ENCODE measurements at regions of chr14 and their contacts with region 1.

Region 1: DNA sequence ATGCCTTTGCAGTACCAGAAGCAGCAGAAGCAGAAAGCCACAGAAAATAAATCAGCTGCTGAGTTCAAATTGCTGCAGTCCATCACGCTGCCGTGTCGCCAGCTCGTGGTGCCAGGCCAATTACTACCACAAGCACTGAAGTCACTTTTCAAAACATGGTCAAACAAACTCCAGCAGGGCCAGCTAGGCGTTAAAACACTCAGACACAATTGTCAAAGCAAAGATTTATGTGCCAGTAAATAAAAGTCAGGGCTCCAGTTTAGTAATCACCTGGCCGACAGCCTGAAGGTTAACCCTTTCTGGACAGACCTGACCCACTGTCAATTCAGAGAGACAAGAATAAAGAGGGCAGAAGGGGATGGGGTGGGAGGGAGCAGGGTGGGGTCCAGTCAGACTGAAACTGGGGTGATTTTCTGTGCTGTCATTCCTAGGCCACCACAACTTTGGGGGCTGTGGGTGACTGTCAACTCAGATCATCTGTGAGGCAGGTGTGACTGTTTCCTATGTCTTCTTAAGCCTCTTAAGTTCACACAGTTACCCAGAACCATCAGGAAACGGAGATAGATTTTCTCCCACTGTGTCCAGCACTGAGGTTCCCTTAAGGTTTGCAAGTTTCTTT is 109.8 kb upstream of the FUT8 start:
- DNase-seq: peak; percentile 98
- ATAC-seq: peak; percentile 69
- H3K4me3 ChIP-seq: peak overlapping the region; percentile 66
- H3K27ac ChIP-seq: peak overlapping the region; percentile 96
- H3K4me1 ChIP-seq: peaks cover 49% of the 10 kb centered on the region
- H3K27me3 ChIP-seq: no peaks in the 10 kb centered on the region
- CTCF ChIP-seq: no peak
- EP300 ChIP-seq: peak in 1 of 2 experiments; percentile 65; a peak in 2 of 4 replicates
- POLR2A ChIP-seq: 0 out of 2 replicates have a peak, but pooled peaks have one; percentile 23
- RAD21 ChIP-seq: 0 out of 2 replicates have a peak, but pooled peaks have one; percentile 12

Region 2: DNA sequence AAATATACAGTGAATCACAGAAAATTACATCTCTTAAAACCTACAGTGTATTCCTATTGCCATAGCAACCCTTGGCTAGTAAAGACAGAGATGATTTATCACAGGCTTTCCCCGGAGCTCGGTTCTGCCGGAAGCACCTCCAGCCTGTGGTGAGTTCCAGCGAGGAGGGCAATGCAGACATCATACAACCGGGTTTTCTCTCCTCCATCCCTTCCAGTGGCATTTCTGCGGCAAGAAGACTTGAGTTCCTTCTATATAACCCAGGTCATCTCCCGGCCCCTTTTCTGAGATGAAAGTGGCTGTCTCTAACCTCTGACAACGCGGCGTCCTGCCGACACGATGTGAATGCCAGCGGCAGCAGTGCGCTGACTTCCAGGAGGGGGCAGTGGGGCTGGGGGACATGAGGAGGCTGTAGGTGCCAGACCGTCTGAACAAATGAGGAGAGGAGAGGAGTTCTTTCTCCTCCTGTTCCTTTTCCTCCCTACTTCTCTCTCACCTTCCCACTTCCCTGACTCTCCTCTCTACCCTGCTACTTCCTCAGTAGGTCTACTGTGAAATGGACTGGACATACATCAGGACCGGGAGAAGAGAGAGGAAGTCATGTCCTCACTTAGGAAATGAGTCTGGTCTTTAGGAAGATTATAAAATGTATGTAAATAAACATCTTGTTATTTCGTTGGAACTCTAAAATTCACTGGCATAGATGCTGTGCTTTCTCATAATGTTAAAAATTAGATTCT is 131.7 kb before region 1 on chr14:
- CTCF ChIA-PET with region 1: interaction called, 3 read pairs
- POLR2A ChIA-PET with region 1: no interaction called
- RAD21 ChIA-PET with region 1: interaction called, 5 read pairs
- SMC1A ChIA-PET with region 1: interaction called, 4 read pairs
- in situ Hi-C with region 1: no loop called
- intact Hi-C with region 1: loop called (anchors 5 kb)
- DNase-seq: peak; percentile 40
- ATAC-seq: peak; percentile 55
- H3K4me3 ChIP-seq: peak overlapping the region; percentile 57
- H3K27ac ChIP-seq: peak overlapping the region; percentile 59
- H3K4me1 ChIP-seq: peaks cover 26% of the 10 kb centered on the region
- H3K27me3 ChIP-seq: no peaks in the 10 kb centered on the region
- CTCF ChIP-seq: peak in 2 of 3 experiments; percentile 25 to 43; a peak in 3 of 6 replicates
- EP300 ChIP-seq: no peak
- POLR2A ChIP-seq: 0 out of 2 replicates have a peak, but pooled peaks have one; percentile 44
- RAD21 ChIP-seq: peak; percentile 46

Region 3: DNA sequence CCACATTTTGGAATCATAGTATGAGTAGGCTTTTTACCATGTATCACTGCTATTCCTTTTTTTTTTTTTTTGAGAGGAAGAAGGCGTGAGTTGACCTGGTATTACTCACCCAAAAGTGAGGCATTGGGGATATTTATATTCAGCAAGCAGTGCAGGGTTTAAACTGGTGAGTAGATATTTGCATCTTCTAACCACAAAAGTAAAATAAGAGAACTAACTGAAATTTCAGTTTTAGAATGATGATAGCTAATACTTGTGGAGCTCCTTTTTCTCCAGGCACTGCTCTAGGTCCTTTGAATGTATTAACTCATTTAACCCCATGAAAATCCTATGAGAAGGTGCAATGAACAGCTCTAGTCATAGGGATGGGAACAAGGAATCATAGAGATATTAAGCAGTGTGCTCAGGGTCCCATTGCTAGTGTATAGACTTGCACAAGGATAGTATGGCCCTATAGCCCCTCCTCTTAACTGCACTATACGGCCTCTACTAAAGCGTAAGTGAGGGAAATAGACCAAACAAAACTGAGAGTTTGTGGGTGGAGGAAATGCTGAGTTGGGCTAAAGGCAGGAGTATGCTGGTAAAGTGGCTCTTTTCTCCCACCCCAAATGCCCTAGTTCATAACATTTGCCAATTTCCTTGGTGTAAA is 96.1 kb before region 1 on chr14:
- CTCF ChIA-PET with region 1: interaction called, 5 read pairs
- POLR2A ChIA-PET with region 1: interaction called, 5 read pairs
- RAD21 ChIA-PET with region 1: interaction called, 12 read pairs
- SMC1A ChIA-PET with region 1: interaction called, 4 read pairs
- in situ Hi-C with region 1: no loop called
- intact Hi-C with region 1: loop called (anchors 2 kb)
- DNase-seq: peak; percentile 88
- ATAC-seq: peak; percentile 83
- H3K4me3 ChIP-seq: peak overlapping the region; percentile 56
- H3K27ac ChIP-seq: peak overlapping the region; percentile 96
- H3K4me1 ChIP-seq: peaks cover 63% of the 10 kb centered on the region
- H3K27me3 ChIP-seq: no peaks in the 10 kb centered on the region
- CTCF ChIP-seq: no peak
- EP300 ChIP-seq: peak; percentile 56 to 70; a peak in 3 of 4 replicates
- POLR2A ChIP-seq: peak; percentile 33; the same call in 1 of the 2 replicates
- RAD21 ChIP-seq: no peak

Region 4: DNA sequence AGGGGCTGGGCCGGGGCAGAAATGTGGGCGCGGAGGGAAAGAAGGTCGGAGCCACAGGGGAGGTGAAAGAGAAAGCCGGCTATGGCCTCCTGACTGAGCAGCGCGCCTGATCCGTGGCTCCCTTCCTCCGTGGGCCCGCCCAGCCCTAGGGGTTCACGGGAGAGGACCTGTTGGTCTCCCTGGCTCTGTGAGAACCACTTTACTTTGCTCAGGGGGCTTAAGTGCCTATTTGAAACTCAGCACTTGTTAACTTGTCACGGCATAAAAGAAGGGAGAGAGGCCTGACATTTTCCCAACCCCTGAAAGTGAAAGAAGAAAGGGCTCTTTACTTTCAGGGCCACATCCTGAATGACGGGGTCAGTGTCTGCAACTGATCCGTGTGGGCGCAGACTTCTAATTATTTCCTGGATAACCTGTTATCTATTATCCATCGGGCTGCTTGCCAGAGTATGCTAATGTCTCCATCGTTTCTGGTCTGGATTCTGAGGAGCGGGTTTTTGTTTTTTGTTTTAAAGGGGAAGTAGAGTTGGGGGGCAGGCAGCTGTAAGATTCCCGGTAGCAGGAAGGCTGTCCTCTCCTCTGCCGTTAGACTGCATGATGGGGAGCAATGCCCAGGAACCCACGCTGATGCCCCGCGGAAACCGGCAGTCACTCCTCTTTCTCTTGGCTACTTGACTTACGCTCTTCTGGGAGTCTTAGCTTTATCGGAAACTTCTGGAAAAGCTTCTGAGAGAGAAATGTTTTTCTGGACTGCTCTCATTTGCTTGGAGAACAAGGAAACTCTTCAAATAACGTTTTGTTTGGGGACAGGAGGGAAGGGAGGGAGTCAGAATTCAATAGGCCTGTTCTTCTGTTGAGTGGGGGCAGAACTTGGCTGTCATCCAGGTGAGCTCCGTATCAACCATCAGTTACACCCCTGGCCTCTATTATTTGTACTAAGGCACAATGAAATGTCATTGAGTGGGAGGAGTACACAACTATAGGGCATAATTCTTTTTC is 72.6 kb before region 1 on chr14:
- CTCF ChIA-PET with region 1: interaction called, 5 read pairs
- POLR2A ChIA-PET with region 1: no interaction called
- RAD21 ChIA-PET with region 1: interaction called, 4 read pairs
- SMC1A ChIA-PET with region 1: interaction called, 50 read pairs
- in situ Hi-C with region 1: no loop called
- intact Hi-C with region 1: loop called (anchors 1 kb)
- DNase-seq: no peak
- ATAC-seq: peak; percentile 60
- H3K4me3 ChIP-seq: 0 out of 2 replicates have a peak overlapping the region, but pooled peaks have one; percentile 26
- H3K27ac ChIP-seq: peak overlapping the region; percentile 64
- H3K4me1 ChIP-seq: peaks cover 41% of the 10 kb centered on the region
- H3K27me3 ChIP-seq: no peaks in the 10 kb centered on the region
- CTCF ChIP-seq: no peak
- EP300 ChIP-seq: no peak
- POLR2A ChIP-seq: no peak
- RAD21 ChIP-seq: no peak

Region 5: GRCh38 chr14:65287264-65288131 is 15.2 kb before region 1 on chr14:
- CTCF ChIA-PET with region 1: interaction called, 63 read pairs
- POLR2A ChIA-PET with region 1: interaction called, 51 read pairs
- RAD21 ChIA-PET with region 1: interaction called, 146 read pairs
- SMC1A ChIA-PET with region 1: interaction called, 203 read pairs
- in situ Hi-C with region 1: no loop called
- intact Hi-C with region 1: loop called (anchors 1 kb)
- DNase-seq: no peak
- ATAC-seq: peak; percentile 77
- H3K4me3 ChIP-seq: peak overlapping the region; percentile 53
- H3K27ac ChIP-seq: peak overlapping the region; percentile 98
- H3K4me1 ChIP-seq: peaks cover 77% of the 10 kb centered on the region
- H3K27me3 ChIP-seq: no peaks in the 10 kb centered on the region
- CTCF ChIP-seq: peak in 2 of 3 experiments; percentile 2 to 6; a peak in 1 of 6 replicates
- EP300 ChIP-seq: peak; percentile 51 to 55; a peak in 2 of 4 replicates
- POLR2A ChIP-seq: peak; percentile 75
- RAD21 ChIP-seq: no peak; the same call in 1 of the 2 replicates

Region 6: DNA sequence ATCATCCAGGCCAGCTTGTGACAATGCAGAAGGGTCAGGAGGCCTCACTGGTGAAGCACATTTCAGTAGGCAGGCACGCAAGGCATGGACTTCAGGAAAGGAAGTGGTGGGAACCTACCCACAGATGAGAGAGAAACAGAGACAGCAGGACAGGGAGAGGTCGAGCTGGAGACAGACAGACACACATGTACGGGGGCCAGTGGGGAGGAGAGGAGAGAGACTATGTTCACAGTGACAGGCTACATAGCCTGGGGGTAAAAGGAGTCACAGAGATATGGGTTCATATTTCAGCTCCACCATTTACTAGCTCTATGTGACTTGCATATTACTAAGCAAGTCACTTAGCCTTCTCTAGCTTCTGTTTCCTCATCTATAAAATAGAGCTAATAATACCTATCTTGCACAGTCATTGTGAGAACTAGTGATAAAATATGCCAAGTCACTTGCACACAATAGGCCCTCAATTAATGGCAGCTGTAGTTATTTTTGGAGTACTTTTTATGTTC is 18.7 kb after region 1 on chr14:
- CTCF ChIA-PET with region 1: interaction called, 61 read pairs
- POLR2A ChIA-PET with region 1: interaction called, 223 read pairs
- RAD21 ChIA-PET with region 1: interaction called, 272 read pairs
- SMC1A ChIA-PET with region 1: interaction called, 391 read pairs
- in situ Hi-C with region 1: no loop called
- intact Hi-C with region 1: loop called (anchors 1 kb)
- DNase-seq: peak; percentile 82
- ATAC-seq: peak; percentile 51
- H3K4me3 ChIP-seq: no peak overlapping the region
- H3K27ac ChIP-seq: peak overlapping the region; percentile 94
- H3K4me1 ChIP-seq: peaks cover 47% of the 10 kb centered on the region
- H3K27me3 ChIP-seq: no peaks in the 10 kb centered on the region
- CTCF ChIP-seq: no peak
- EP300 ChIP-seq: peak in 1 of 2 experiments; percentile 35; a peak in 1 of 4 replicates
- POLR2A ChIP-seq: peak; percentile 37; the same call in 1 of the 2 replicates
- RAD21 ChIP-seq: peak; percentile 11; the same call in 1 of the 2 replicates

Region 7: DNA sequence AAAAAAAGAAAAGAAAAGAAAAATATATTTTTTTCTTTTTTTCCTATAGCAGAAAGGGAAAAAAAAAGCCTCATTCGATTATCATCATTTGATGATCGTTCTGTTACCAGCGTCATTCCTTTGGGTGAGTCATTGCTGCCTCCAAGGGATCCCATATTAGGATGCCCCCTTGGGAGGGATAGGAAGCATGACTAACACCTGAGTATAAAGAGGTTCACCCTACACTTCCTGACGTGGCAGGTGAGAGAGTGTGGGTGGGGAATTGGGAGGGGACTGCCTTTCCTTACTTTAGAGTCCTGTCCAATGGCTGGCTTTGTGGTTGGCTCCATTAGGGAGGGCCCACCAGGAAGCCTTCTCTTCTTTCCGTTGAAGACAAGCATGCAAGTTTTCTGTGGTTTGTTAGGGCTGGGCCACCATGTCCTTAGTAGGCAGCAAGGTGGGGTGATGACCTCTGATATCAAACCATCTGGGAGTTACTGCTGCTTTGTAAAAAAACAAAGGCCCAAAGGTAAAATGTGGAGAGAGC is 53.7 kb after region 1 on chr14:
- CTCF ChIA-PET with region 1: interaction called, 4 read pairs
- POLR2A ChIA-PET with region 1: interaction called, 10 read pairs
- RAD21 ChIA-PET with region 1: interaction called, 77 read pairs
- SMC1A ChIA-PET with region 1: interaction called, 33 read pairs
- in situ Hi-C with region 1: no loop called
- intact Hi-C with region 1: loop called (anchors 1 kb)
- DNase-seq: no peak
- ATAC-seq: no peak
- H3K4me3 ChIP-seq: no peak overlapping the region
- H3K27ac ChIP-seq: peak overlapping the region; percentile 72
- H3K4me1 ChIP-seq: peaks cover 64% of the 10 kb centered on the region
- H3K27me3 ChIP-seq: no peaks in the 10 kb centered on the region
- CTCF ChIP-seq: no peak
- EP300 ChIP-seq: no peak
- POLR2A ChIP-seq: no peak
- RAD21 ChIP-seq: no peak